Mammary epithelial cell (primary cell): ENCODE measurements at regions of chr16 and their contacts with region 1.

Region 1: GRCh38 chr16:22190776-22191531 is 15.1 kb upstream of the EEF2K start:
- DNase-seq: peak; percentile 99
- H3K4me3 ChIP-seq: peak overlapping the region; percentile 48 to 66 (median 56)
- H3K27ac ChIP-seq: peak overlapping the region; percentile 94
- H3K4me1 ChIP-seq: peaks cover 35% of the 10 kb centered on the region
- H3K27me3 ChIP-seq: no peaks in the 10 kb centered on the region
- CTCF ChIP-seq: no peak

Region 2: GRCh38 chr16:21599233-21600030 is 591.5 kb before region 1 on chr16 and contains the start of gene METTL9:
- CTCF ChIA-PET with region 1: no interaction called
- dilution Hi-C with region 1: no loop called
- in situ Hi-C with region 1: no loop called
- intact Hi-C with region 1: loop called (anchors 10 kb)
- DNase-seq: peak; percentile 94
- H3K4me3 ChIP-seq: peak within 1 kb of the TSS; percentile 70 to 92 (median 78)
- H3K27ac ChIP-seq: peak within 1 kb of the TSS; percentile 73
- H3K4me1 ChIP-seq: peaks cover 12% of the 10 kb centered on the region
- H3K27me3 ChIP-seq: no peaks in the 10 kb centered on the region
- CTCF ChIP-seq: no peak
- total RNA-seq, gene METTL9: 86.1 to 131 TPM

Region 3: GRCh38 chr16:21982108-21982507 is 208.8 kb before region 1 on chr16:
- CTCF ChIA-PET with region 1: no interaction called
- dilution Hi-C with region 1: no loop called
- in situ Hi-C with region 1: no loop called
- intact Hi-C with region 1: loop called (anchors 5 kb)
- DNase-seq: no peak
- H3K4me3 ChIP-seq: no peak overlapping the region
- H3K27ac ChIP-seq: no peak overlapping the region
- H3K4me1 ChIP-seq: peaks cover 3% of the 10 kb centered on the region
- H3K27me3 ChIP-seq: no peaks in the 10 kb centered on the region
- CTCF ChIP-seq: no peak

Region 4: DNA sequence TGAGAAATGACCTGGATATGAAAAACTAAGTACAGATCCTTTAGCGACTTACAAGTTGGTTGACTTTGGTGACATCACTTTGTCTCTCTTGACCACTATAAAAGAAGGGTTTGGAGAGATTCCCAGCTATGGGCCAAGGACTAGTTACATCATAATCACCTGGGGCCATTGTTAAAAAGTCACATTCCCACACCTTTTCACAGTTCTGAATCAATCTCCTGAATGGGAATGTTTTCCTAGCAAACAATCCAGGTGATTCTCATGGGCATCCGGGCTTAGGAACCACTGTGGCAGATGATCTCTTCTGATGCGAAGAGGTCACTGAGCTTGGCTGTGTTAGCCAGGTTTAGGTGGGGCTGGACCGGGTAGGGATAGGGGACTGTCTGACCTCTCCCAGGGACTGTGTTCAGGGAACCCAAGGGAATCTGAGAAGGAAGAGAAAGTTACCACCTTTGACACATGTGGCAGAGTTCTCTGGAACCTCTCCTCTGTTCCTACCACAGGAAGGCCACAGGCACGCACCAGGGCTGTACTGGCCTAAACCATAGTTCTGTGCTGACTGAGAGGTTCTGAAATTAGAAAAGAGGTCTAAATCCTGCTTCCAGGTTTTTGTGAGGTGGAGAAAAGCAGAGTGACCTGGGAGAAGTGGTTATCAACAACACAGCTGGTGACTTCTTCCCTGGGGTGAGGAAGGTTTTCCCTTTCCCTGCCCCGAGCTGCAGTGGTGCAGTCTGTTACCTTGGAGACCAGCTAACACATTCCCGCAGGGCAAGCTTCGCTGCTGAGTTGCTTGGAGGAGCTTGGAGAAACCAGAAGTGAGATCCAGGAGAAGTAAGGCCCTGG is 99.0 kb before region 1 on chr16 and contains the start of gene VWA3A:
- CTCF ChIA-PET with region 1: no interaction called
- dilution Hi-C with region 1: loop called (anchors 5 kb)
- in situ Hi-C with region 1: loop called in 1 of 2 experiments (anchors 5 kb)
- intact Hi-C with region 1: no loop called
- DNase-seq: no peak
- H3K4me3 ChIP-seq: no peak within 1 kb of the TSS
- H3K27ac ChIP-seq: no peak within 1 kb of the TSS
- H3K4me1 ChIP-seq: no peaks in the 10 kb centered on the region
- H3K27me3 ChIP-seq: no peaks in the 10 kb centered on the region
- CTCF ChIP-seq: no peak
- total RNA-seq, gene VWA3A: not detected

Region 5: GRCh38 chr16:22141746-22142145 is 49.2 kb before region 1 on chr16:
- CTCF ChIA-PET with region 1: no interaction called
- dilution Hi-C with region 1: no loop called
- in situ Hi-C with region 1: no loop called
- intact Hi-C with region 1: loop called (anchors 5 kb)
- DNase-seq: peak; percentile 13
- H3K4me3 ChIP-seq: no peak overlapping the region
- H3K27ac ChIP-seq: no peak overlapping the region
- H3K4me1 ChIP-seq: no peaks in the 10 kb centered on the region
- H3K27me3 ChIP-seq: peaks cover 8% of the 10 kb centered on the region
- CTCF ChIP-seq: peak; percentile 39 to 64

Region 6: DNA sequence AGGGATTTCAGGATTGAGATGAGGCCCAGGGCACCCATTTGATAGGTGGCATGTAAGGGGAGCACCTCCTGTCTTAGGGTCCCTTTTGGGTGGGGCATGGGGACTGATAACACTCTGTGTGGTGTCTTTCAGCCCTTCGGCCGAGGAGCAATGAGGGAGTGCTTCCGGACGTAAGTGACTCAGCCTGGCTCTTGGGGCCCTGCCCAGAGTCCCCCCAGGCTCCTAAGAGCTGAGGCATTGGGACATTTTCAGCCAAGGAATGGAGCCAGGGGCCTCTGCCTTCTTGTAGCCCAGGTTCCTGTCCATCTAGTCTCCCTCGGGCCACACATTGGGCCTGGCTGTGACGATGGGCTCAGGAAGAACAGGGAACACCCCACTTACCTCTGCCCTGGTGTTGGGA is 59.6 kb after region 1 on chr16:
- CTCF ChIA-PET with region 1: no interaction called
- dilution Hi-C with region 1: loop called (anchors 10 kb)
- in situ Hi-C with region 1: no loop called
- intact Hi-C with region 1: no loop called
- DNase-seq: no peak
- H3K4me3 ChIP-seq: no peak overlapping the region
- H3K27ac ChIP-seq: no peak overlapping the region
- H3K4me1 ChIP-seq: no peaks in the 10 kb centered on the region
- H3K27me3 ChIP-seq: no peaks in the 10 kb centered on the region
- CTCF ChIP-seq: no peak